Heart left ventricle (tissue), 16 donors: ENCODE measurements at regions of chr19 and their contacts with region 1.

Region 1: GRCh38 chr19:1275260-1275975 is at the start of gene FAM174C:
- DNase-seq: peak; percentile 95 to 97 (median 97)
- ATAC-seq: peak; percentile 51 to 86 (median 82)
- H3K4me3 ChIP-seq: peak within 1 kb of the TSS; percentile 48 to 98 (median 73)
- H3K27ac ChIP-seq: peak within 1 kb of the TSS; percentile 86 to 100 (median 98)
- H3K4me1 ChIP-seq: peaks cover 8 to 70% (median 59%) of the 10 kb centered on the region in 12 donors
- H3K27me3 ChIP-seq: no peaks in the 10 kb centered on the region
- CTCF ChIP-seq: no peak
- POLR2A ChIP-seq: peak in 1 of 2 donors; percentile 80
- total RNA-seq, gene FAM174C: 11.6 to 46.7 (median 18.7) TPM

Region 2: DNA sequence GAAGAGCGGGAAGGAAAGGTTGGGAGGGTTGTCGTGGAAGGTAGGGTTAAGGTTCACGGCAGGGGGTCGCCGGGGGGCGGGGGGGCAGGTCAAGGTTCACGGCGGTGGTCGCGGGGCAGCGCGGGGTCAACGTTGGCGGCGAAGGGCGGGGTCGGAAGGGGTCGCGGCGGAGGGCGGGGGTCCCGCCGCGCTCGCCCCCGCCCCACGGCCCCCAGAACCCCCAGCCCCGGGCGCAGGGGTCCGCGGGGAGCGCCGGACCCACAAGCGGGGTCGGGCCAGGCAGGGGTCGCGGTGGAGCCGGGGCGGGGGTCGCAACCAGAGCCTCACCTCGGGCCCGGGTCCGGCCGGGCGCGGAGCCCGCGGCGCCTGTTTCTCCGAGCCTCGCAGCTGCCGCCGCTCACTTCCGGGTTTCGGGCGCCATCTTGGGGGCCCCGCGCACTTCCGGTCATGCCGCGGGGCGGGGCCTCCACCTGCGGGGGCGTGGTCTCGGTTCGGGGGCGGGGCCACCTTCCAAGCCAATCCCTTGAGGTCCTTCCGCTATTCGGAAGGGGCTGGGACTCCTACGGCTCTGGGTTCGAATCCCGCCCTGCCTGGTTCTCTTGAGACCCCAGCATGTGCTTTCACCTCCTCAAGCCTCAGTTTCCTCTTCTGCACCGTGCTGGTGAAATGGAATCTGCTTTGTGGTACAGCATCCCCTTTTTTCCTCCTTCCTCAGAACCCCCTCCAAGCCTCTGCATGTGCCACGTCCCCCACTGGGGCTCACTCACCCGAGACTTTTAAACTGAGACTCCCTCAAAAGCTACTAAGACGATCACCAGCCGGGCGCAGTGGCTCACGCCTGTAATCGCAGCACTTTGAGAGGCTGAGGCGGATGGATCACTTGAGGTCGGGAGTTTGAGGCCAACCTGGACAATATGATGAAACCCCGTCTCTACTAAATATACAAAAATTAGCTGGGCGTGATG is 101.3 kb before region 1 on chr19 and contains the start of gene SBNO2:
- intact Hi-C with region 1: no loop called
- DNase-seq: peak; percentile 85 to 97 (median 90)
- ATAC-seq: peak; percentile 81 to 92 (median 90)
- H3K4me3 ChIP-seq: peak within 1 kb of the TSS; percentile 68 to 97 (median 85)
- H3K27ac ChIP-seq: peak within 1 kb of the TSS; percentile 67 to 95 (median 92)
- H3K4me1 ChIP-seq: peaks cover 2 to 65% (median 16%) of the 10 kb centered on the region in 12 donors
- H3K27me3 ChIP-seq: no peaks in the 10 kb centered on the region
- CTCF ChIP-seq: no peak
- POLR2A ChIP-seq: peak in 1 of 2 donors; percentile 35
- total RNA-seq, gene SBNO2: 9.9 to 78.9 (median 20.0) TPM

Region 3: GRCh38 chr19:1205114-1206062 is 70.0 kb before region 1 on chr19 and contains the start of gene STK11:
- intact Hi-C with region 1: no loop called
- DNase-seq: peak; percentile 99 to 100 (median 100)
- ATAC-seq: peak; percentile 91 to 94 (median 92)
- H3K4me3 ChIP-seq: peak within 1 kb of the TSS; percentile 61 to 88 (median 78)
- H3K27ac ChIP-seq: peak within 1 kb of the TSS; percentile 41 to 96 (median 89)
- H3K4me1 ChIP-seq: peaks cover 0 to 62% (median 36%) of the 10 kb centered on the region in 12 donors
- H3K27me3 ChIP-seq: no peaks in the 10 kb centered on the region
- CTCF ChIP-seq: no peak
- POLR2A ChIP-seq: peak; percentile 22 to 77
- total RNA-seq, gene STK11: 44.7 to 92.0 (median 50.7) TPM

Region 4: DNA sequence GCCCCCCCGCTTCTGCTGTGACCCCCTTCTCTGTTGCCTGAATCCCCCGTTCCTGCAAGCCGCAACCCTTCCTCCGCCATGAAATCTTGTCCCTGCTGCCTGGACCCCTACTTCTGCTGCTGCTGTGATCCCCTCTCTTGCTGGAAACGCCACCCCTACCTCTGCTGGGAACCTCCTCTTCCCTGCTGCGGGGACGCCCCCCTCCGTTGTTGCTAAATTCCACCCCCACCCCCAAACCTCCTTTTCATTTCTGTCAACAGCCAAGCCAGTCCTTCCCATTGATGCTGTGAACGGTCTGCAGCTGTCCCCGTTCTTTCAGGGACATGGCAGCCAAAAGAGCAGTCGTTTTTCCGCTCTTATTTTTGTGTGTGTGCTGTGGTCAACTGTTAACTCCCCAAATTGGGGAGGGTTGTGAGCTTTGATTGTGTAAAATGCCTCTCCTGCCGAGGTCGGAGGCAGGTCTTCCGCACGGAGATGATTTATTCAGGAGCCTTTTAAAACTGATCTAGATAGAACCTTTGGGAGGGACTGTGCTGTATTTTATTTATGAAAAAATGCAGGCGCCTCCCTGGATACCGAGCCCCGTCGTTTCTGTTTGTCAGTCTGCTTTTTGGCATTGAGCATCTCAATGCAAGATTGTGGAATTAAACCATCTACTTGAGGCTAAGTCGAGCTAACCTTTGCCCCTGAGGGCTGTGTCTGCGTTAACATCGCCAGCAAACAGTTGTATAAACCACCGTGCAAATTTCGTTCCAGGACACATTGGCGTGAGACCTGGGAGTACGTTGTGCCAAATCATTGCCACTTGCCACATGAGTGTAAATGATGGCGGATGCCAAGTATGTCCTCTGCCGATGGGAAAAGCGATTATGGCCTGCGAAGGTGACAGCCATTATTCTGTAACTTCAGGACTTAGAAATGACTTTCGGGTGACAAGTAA is 80.4 kb after region 1 on chr19:
- intact Hi-C with region 1: loop called in 4 of 10 experiments (anchors 5 to 10 kb)
- DNase-seq: peak in 1 of 5 donors; percentile 39
- ATAC-seq: no peak
- H3K4me3 ChIP-seq: peak overlapping the region; percentile 66 to 99 (median 88)
- H3K27ac ChIP-seq: peak overlapping the region in 10 of 12 donors; percentile 23 to 100 (median 90)
- H3K4me1 ChIP-seq: peaks cover 5 to 31% (median 20%) of the 10 kb centered on the region in 12 donors
- H3K27me3 ChIP-seq: no peaks in the 10 kb centered on the region
- CTCF ChIP-seq: no peak
- POLR2A ChIP-seq: no peak

Region 5: GRCh38 chr19:1383311-1384084 is 108.1 kb after region 1 on chr19 and contains the start of gene NDUFS7:
- intact Hi-C with region 1: loop called in 4 of 10 experiments (anchors 5 to 10 kb)
- DNase-seq: peak; percentile 90 to 94 (median 92)
- ATAC-seq: peak; percentile 70 to 88 (median 85)
- H3K4me3 ChIP-seq: peak within 1 kb of the TSS; percentile 69 to 100 (median 88)
- H3K27ac ChIP-seq: peak within 1 kb of the TSS; percentile 92 to 99 (median 96)
- H3K4me1 ChIP-seq: peaks cover 2 to 54% (median 40%) of the 10 kb centered on the region in 12 donors
- H3K27me3 ChIP-seq: no peaks in the 10 kb centered on the region
- CTCF ChIP-seq: peak in 2 of 12 donors; percentile 4 to 8
- POLR2A ChIP-seq: peak; percentile 34 to 69
- total RNA-seq, gene NDUFS7: 205 to 717 (median 336) TPM

Region 6: GRCh38 chr19:1401138-1401888 is 125.9 kb after region 1 on chr19 and contains the start of gene GAMT:
- intact Hi-C with region 1: loop called in 5 of 10 experiments (anchors 5 to 10 kb)
- DNase-seq: peak in 4 of 5 donors; percentile 58 to 79 (median 64)
- ATAC-seq: peak in 3 of 4 donors; percentile 21 to 71 (median 60)
- H3K4me3 ChIP-seq: peak within 1 kb of the TSS; percentile 59 to 78 (median 72)
- H3K27ac ChIP-seq: peak within 1 kb of the TSS; percentile 40 to 87 (median 76)
- H3K4me1 ChIP-seq: peaks cover 5 to 36% (median 23%) of the 10 kb centered on the region in 12 donors
- H3K27me3 ChIP-seq: peaks cover 0 to 25% (median 0%) of the 10 kb centered on the region in 9 donors
- CTCF ChIP-seq: peak; percentile 20 to 80 (median 66)
- POLR2A ChIP-seq: peak in 1 of 2 donors; percentile 33
- total RNA-seq, gene GAMT: 35.9 to 167 (median 62.5) TPM

Region 7: GRCh38 chr19:1438035-1438932 is 162.9 kb after region 1 on chr19 and contains the start of gene RPS15:
- intact Hi-C with region 1: loop called in 1 of 10 experiments (anchors 5 kb)
- DNase-seq: peak; percentile 95 to 99 (median 96)
- ATAC-seq: peak; percentile 86 to 95 (median 91)
- H3K4me3 ChIP-seq: peak within 1 kb of the TSS; percentile 57 to 100 (median 92)
- H3K27ac ChIP-seq: peak within 1 kb of the TSS; percentile 78 to 94 (median 90)
- H3K4me1 ChIP-seq: peaks cover 2 to 30% (median 20%) of the 10 kb centered on the region in 12 donors
- H3K27me3 ChIP-seq: no peaks in the 10 kb centered on the region
- CTCF ChIP-seq: peak; percentile 89 to 99 (median 94)
- POLR2A ChIP-seq: peak in 1 of 2 donors; percentile 95
- total RNA-seq, gene RPS15: 468 to 2,348 (median 669) TPM

Region 8: DNA sequence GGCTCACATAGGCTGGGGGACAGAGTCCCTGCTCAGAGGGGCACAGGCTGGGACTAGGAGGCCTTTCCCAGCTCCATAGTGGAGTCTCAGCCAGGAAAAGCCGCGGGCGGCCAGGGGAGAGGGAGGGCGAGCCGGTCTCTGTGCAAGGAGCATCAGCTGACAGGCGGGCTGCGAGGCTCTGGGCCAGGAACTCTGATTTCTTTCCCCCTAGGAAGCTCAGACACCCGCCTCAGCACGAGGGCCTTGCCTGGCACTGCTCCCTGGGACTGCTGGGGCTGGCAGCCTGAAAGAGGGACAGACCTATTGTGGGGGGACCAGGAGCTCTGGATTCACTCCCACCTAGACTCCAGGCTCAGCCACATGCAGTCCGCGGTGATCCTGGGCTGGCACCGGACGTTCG is 246.2 kb after region 1 on chr19:
- intact Hi-C with region 1: loop called in 4 of 10 experiments (anchors 5 to 10 kb)
- DNase-seq: peak in 3 of 5 donors; percentile 45 to 63 (median 52)
- ATAC-seq: peak; percentile 38 to 86 (median 50)
- H3K4me3 ChIP-seq: no peak overlapping the region
- H3K27ac ChIP-seq: peak overlapping the region in 6 of 12 donors; percentile 4 to 68 (median 56)
- H3K4me1 ChIP-seq: peaks cover 0 to 20% (median 0%) of the 10 kb centered on the region in 12 donors
- H3K27me3 ChIP-seq: peaks cover 6 to 42% (median 29%) of the 10 kb centered on the region in 9 donors
- CTCF ChIP-seq: no peak
- POLR2A ChIP-seq: no peak

Region 9: DNA sequence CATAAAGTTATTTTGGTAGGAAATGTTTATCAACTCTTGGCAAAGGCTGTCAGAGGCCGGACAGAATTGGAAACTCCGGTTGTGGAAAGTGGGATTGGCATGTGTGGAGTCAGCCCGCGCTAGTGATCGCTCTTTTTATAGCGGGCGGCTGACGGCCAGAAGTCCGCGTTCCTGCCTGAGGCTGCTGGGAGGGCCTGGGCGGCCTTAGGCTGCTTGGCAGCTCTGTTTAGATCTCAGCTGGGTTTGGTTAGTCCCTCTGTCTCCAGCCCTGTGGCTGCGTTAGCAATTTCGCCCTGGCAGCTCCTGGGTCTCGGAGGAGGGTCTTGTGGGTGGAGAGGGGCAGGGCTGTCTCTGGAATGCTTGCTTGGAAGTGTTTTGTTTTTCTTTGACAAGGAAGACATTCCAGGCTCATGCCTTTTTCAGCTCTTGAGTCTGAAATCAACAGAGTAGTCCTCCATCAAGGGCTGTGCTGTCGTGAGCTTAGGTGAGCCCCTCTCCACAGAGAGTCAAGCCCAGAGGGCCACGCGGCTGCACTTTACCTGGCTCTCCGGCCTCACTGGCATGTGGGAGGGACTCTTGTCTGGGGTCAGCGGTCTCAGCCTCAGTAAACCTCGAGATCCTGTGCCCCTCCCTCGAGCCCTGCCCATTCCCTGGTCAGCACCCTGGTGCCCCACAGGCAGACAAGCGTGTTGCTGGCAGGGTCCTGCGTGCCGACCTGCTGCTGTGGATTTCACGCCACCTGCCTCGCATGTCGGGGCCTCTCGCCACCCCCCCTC is 910.8 kb after region 1 on chr19:
- intact Hi-C with region 1: no loop called
- DNase-seq: peak; percentile 87 to 93 (median 88)
- ATAC-seq: peak; percentile 93 to 96 (median 94)
- H3K4me3 ChIP-seq: peak overlapping the region in 7 of 12 donors; percentile 1 to 26 (median 20)
- H3K27ac ChIP-seq: peak overlapping the region; percentile 16 to 89 (median 82)
- H3K4me1 ChIP-seq: peaks cover 5 to 73% (median 44%) of the 10 kb centered on the region in 12 donors
- H3K27me3 ChIP-seq: no peaks in the 10 kb centered on the region
- CTCF ChIP-seq: no peak
- POLR2A ChIP-seq: no peak